MCF 10A (cell line): ENCODE measurements at regions of chr22 and their contacts with region 1.

Region 1: DNA sequence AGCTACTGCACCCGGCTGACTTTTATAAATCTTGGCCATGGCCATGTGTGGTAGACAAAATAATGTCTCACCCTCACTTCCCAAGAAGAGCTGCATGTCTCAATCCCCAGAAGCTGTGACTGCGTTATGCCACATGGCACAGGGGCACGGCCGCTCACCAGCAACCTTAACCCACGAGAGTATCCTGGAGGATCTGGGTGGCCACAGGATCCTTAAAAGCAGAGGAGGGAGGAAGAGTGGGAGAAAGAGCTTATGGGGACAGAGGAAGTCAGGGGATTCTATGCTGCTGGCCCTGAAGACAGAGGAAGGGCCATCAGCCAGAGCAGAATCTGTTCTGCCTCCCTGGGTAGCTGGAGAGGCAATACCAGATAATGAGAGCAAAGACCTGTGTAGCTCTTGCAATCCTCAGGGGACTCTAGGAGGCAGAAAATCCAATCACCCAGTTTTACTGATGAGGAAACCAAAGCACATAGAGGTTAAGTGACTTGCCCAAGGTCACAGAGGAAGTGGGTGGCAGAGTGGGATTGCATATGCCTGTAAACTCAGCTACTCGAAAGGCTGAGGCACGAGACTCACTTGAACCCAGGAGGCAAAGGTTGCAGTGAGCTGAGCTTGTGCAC is 55.3 kb downstream of the CELSR1 start:
- DNase-seq: no peak
- H3K4me3 Mint-ChIP-seq: no peak overlapping the region
- H3K27ac Mint-ChIP-seq: no peak overlapping the region
- H3K4me1 Mint-ChIP-seq: no peaks in the 10 kb centered on the region
- H3K27me3 Mint-ChIP-seq: no peaks in the 10 kb centered on the region
- CTCF ChIP-seq: no peak

Region 2: GRCh38 chr22:46449974-46450745 is 32.0 kb before region 1 on chr22:
- CTCF ChIA-PET with region 1: interaction called, 4 read pairs
- POLR2A ChIA-PET with region 1: no interaction called
- intact Hi-C with region 1: loop called (anchors 1 kb)
- DNase-seq: no peak
- H3K4me3 Mint-ChIP-seq: no peak overlapping the region
- H3K27ac Mint-ChIP-seq: no peak overlapping the region
- H3K4me1 Mint-ChIP-seq: peaks cover 40% of the 10 kb centered on the region
- H3K27me3 Mint-ChIP-seq: no peaks in the 10 kb centered on the region
- CTCF ChIP-seq: no peak

Region 3: GRCh38 chr22:46465802-46466201 is 16.4 kb before region 1 on chr22:
- CTCF ChIA-PET with region 1: no interaction called
- POLR2A ChIA-PET with region 1: no interaction called
- intact Hi-C with region 1: no loop called
- DNase-seq: no peak
- H3K4me3 Mint-ChIP-seq: no peak overlapping the region
- H3K27ac Mint-ChIP-seq: peak overlapping the region; percentile 74
- H3K4me1 Mint-ChIP-seq: peaks cover 8% of the 10 kb centered on the region
- H3K27me3 Mint-ChIP-seq: no peaks in the 10 kb centered on the region
- CTCF ChIP-seq: no peak